ENCODE measurements at regions of chr12 and their contacts with region 1.

Region 1: GRCh38 chr12:45728630-45729232 is 775 bp upstream of the ARID2 start:
- DNase-seq: peak; percentile 97
- ATAC-seq: peak; percentile 73
- H3K4me3 Mint-ChIP-seq: peak overlapping the region; percentile 98
- H3K27ac Mint-ChIP-seq: peak overlapping the region; percentile 99
- H3K4me1 Mint-ChIP-seq: peaks cover 16% of the 10 kb centered on the region
- H3K27me3 Mint-ChIP-seq: no peaks in the 10 kb centered on the region

Region 2: GRCh38 chr12:44847888-44848702 is 880.6 kb before region 1 on chr12:
- CTCF ChIA-PET with region 1: no interaction called
- POLR2A ChIA-PET with region 1: no interaction called
- intact Hi-C with region 1: loop called in 1 of 2 experiments (anchors 10 kb)
- DNase-seq: peak; percentile 78
- ATAC-seq: peak; percentile 86
- H3K4me3 Mint-ChIP-seq: peak overlapping the region; percentile 59
- H3K27ac Mint-ChIP-seq: peak overlapping the region; percentile 96
- H3K4me1 Mint-ChIP-seq: peaks cover 80% of the 10 kb centered on the region
- H3K27me3 Mint-ChIP-seq: no peaks in the 10 kb centered on the region

Region 3: GRCh38 chr12:45234139-45234846 is 494.4 kb before region 1 on chr12:
- CTCF ChIA-PET with region 1: interaction called, 3 read pairs
- POLR2A ChIA-PET with region 1: no interaction called
- intact Hi-C with region 1: loop called (anchors 1 to 5 kb)
- DNase-seq: no peak
- ATAC-seq: peak; percentile 60
- H3K4me3 Mint-ChIP-seq: peak overlapping the region; percentile 4
- H3K27ac Mint-ChIP-seq: peak overlapping the region; percentile 85
- H3K4me1 Mint-ChIP-seq: peaks cover 69% of the 10 kb centered on the region
- H3K27me3 Mint-ChIP-seq: no peaks in the 10 kb centered on the region

Region 4: GRCh38 chr12:45670346-45671065 is 58.2 kb before region 1 on chr12:
- CTCF ChIA-PET with region 1: interaction called, 9 read pairs
- POLR2A ChIA-PET with region 1: no interaction called
- intact Hi-C with region 1: loop called (anchors 1 kb)
- DNase-seq: peak; percentile 10
- ATAC-seq: peak; percentile 70
- H3K4me3 Mint-ChIP-seq: no peak overlapping the region
- H3K27ac Mint-ChIP-seq: no peak overlapping the region
- H3K4me1 Mint-ChIP-seq: peaks cover 24% of the 10 kb centered on the region
- H3K27me3 Mint-ChIP-seq: peaks cover 4% of the 10 kb centered on the region

Region 5: GRCh38 chr12:45745861-45746277 is 17.1 kb after region 1 on chr12:
- CTCF ChIA-PET with region 1: interaction called, 23 read pairs
- POLR2A ChIA-PET with region 1: interaction called, 3 read pairs
- intact Hi-C with region 1: no loop called
- DNase-seq: no peak
- ATAC-seq: peak; percentile 61
- H3K4me3 Mint-ChIP-seq: no peak overlapping the region
- H3K27ac Mint-ChIP-seq: no peak overlapping the region
- H3K4me1 Mint-ChIP-seq: peaks cover 50% of the 10 kb centered on the region
- H3K27me3 Mint-ChIP-seq: no peaks in the 10 kb centered on the region

Region 6: DNA sequence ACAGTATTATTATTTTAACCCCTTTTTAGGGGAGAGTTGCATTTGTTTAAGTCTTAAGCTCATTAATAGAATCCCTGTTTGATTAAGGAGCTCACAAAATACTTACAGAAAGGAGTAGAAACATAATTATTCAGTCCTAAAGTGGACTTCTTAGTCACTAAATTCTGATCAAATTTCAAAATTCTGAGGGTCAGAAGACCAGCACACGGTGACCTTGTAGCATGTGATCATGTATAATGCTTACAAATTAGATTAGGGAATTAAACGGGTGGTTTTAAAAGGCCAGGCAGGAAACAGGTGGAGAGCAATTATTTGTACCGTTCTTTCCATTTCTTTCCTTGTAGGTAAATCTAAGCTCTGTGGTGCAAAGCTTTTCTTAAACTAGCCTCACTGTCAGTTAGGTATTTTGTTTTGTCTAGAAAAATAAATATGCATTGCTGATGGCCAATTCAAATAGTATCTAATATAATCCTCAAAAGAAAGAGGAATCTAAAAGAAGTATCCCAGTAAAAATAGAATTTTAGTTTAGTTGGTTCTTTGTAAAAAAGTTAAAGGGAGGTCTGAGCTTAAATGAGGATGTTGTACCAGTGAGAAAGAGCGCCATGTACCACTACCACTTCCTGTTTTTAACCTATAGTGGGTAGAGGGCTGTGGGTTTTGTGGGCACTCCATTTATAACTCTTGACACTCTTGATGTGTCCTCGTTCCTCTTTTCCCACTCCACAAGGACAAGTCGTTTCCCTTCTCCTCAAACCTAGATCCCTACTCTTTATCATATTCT is 489.0 kb after region 1 on chr12:
- CTCF ChIA-PET with region 1: interaction called, 3 read pairs
- POLR2A ChIA-PET with region 1: no interaction called
- intact Hi-C with region 1: loop called (anchors 5 to 10 kb)
- DNase-seq: peak; percentile 73
- ATAC-seq: no peak
- H3K4me3 Mint-ChIP-seq: peak overlapping the region; percentile 37
- H3K27ac Mint-ChIP-seq: peak overlapping the region; percentile 88
- H3K4me1 Mint-ChIP-seq: peaks cover 95% of the 10 kb centered on the region
- H3K27me3 Mint-ChIP-seq: no peaks in the 10 kb centered on the region

Region 7: DNA sequence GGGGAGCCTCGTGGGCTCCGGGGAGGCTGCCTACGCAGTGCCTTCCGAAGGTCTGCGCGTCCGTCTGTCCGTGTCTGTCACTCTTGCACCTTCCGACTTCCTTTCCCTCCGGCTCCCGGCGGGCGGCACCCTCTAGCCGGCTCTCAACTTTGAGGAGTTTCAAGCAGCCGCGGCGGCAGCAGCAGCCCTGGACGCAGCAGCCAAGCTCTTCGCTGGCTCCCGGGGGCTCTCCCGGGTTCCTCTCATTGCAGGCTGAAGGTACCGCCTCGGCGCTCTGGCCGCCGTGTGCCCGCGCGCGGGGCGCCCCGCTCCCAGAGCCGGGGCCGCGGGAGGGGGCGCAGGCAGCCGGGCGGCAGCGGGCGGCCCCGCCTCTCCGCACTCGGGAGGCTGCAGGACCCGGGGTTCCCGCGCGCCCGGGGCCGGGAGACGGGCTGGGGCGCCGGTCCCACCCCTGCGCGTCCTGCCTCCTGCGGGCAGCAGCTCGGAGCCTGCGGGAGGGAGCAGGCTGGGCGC is 1350.8 kb after region 1 on chr12 and contains the starts of genes AMIGO2 and PCED1B:
- CTCF ChIA-PET with region 1: no interaction called
- POLR2A ChIA-PET with region 1: no interaction called
- intact Hi-C with region 1: loop called in 1 of 2 experiments (anchors 5 kb)
- DNase-seq: peak; percentile 85
- ATAC-seq: peak; percentile 59
- H3K4me3 Mint-ChIP-seq: peak within 1 kb of the TSS; percentile 96
- H3K27ac Mint-ChIP-seq: peak within 1 kb of the TSS; percentile 96
- H3K4me1 Mint-ChIP-seq: peaks cover 73% of the 10 kb centered on the region
- H3K27me3 Mint-ChIP-seq: no peaks in the 10 kb centered on the region
- total RNA-seq, gene AMIGO2: 15.1 to 17.1 TPM
- total RNA-seq, gene PCED1B: 76.3 to 82.3 TPM